ENCODE measurements at regions of chr22 and their contacts with region 1.

Region 1: DNA sequence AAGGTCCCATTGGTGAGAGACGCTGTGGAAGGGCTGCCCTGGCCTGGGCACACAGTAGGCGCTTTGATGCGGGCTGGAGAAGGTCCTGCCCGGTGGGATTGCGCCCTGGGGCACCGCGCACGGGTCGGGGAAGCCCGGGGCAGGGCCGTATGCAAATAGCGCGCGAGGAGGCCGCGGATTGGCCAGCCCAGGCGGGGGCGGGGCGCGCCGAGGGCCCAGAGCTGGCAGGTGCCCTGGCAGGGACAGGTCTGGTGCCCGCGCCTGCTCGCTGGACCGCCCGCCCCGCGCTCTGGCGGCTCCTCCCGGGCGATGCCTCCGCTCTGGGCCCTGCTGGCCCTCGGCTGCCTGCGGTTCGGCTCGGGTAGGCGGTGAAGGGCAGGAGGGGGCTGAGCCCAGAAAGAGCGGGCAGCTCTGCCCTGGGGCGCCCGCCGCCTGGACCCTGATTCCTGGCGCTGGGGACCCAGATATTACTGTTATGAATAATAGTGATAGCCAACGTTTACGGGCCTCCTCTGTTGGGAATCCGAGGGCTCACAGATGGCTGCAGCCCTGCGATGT is at the start of gene UPK3A:
- DNase-seq: peak; percentile 72 to 87
- ATAC-seq: peak; percentile 85 to 87
- H3K4me3 ChIP-seq: peak within 1 kb of the TSS; percentile 49 to 67 (median 60)
- H3K27ac ChIP-seq: peak within 1 kb of the TSS; percentile 80 to 90 (median 88)
- H3K4me1 ChIP-seq: peaks cover 8 to 10% of the 10 kb centered on the region in 2 donors
- H3K27me3 ChIP-seq: no peaks in the 10 kb centered on the region
- CTCF ChIP-seq: no peak
- POLR2A ChIP-seq: peak; percentile 79 to 85
- total RNA-seq, gene UPK3A: 0.70 to 6.4 (median 2.1) TPM

Region 2: DNA sequence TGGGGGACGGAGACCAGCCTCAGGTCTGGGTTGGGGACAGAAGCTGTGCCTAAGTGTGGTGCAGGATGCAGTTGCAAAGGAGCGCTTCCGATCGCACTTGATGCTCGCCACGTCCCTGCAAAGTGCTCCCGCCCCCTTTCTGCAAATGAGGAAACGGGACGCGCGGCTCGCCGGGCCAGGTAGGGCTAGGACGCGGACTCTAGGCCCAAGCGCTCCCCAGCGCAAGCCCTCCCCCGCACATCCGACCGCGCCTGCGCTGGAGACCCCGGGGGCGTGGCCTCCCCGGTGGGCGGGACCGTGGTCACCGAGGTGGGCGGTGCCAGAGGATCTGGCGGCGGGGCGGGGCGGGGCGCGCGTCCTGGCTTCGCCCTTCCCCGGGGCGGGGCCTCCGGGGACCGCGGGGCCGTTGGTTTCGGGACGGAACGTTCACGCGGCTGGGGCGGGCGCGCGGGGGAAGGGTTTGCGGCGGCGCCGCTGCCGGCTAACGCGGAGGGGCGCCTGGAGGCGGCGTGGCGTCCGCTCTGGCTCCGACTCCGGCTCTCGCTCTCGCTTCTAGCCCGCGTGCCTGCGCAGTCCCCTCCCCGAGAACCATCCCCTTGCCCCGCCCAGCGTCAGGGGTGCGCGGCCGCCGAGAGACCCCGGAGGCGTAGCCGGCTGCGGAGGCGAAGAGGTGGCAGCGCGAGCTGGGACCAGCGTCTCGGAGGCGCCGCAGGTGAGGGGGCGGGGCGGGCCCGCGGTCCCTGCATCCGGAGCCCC is 24.9 kb after region 1 on chr22 and contains the start of gene FAM118A:
- in situ Hi-C with region 1: no loop called
- intact Hi-C with region 1: loop called (anchors 2 kb)
- DNase-seq: peak; percentile 87 to 91
- ATAC-seq: peak; percentile 88 to 89
- H3K4me3 ChIP-seq: peak within 1 kb of the TSS; percentile 79 to 95 (median 89)
- H3K27ac ChIP-seq: peak within 1 kb of the TSS; percentile 89 to 97 (median 96)
- H3K4me1 ChIP-seq: peaks cover 8 to 14% of the 10 kb centered on the region in 2 donors
- H3K27me3 ChIP-seq: no peaks in the 10 kb centered on the region
- CTCF ChIP-seq: peak in 1 of 5 experiments; percentile 19
- POLR2A ChIP-seq: peak; percentile 97 to 99
- total RNA-seq, gene FAM118A: 4.1 to 30.0 (median 24.2) TPM